ENCODE measurements at regions of chr20 and their contacts with region 1.

Region 1: GRCh38 chr20:48620519-48621254 is 207.1 kb downstream of the PREX1 start:
- DNase-seq: peak; percentile 60 to 67 (median 66)
- H3K4me3 ChIP-seq: no peak overlapping the region
- H3K4me3 Mint-ChIP-seq: peak overlapping the region in 7 of 8 donors; percentile 25 to 81 (median 73)
- H3K27ac ChIP-seq: no peak overlapping the region
- H3K27ac Mint-ChIP-seq: peak overlapping the region in 6 of 7 donors; percentile 27 to 89 (median 78)
- H3K4me1 ChIP-seq: peaks cover 13% of the 10 kb centered on the region
- H3K4me1 Mint-ChIP-seq: peaks cover 7 to 18% (median 12%) of the 10 kb centered on the region in 4 donors
- H3K27me3 ChIP-seq: no peaks in the 10 kb centered on the region
- H3K27me3 Mint-ChIP-seq: no peaks in the 10 kb centered on the region

Region 2: DNA sequence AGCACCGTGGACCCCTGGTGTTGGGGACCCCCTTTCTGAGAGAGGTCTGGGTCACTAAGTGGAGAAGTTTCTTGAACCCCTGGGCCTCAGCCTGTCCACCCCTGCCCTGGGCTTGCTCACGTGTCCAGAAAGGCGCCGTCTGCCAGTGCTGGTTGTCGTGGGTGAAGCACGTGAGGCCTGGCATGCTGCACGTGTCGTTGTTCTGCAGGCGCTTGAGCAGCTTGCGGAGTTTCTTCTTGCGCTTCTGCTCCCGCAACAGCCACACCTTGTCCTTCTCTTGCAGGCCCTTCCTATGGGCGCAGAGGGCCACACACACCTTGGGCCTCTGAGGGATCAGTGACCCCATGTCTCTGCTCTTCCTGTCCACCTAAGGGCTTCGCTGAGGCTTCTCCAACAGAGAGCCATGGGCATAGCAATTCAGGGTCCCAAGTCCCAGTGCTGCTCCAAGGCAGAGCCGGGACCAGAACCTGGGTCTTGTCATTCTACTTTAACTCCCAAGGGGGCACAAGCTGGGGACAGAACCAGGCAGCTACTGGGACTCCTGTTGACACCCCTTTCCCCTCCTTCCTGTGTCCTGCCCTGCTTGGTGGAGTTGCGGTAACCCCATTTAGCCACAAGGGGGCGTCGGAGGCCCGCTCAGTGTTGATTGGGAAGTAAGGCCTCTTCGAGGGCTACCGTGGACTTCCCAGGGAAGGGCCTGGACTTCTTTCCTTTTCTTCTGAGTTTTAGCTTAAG is 957.2 kb before region 1 on chr20:
- CTCF ChIA-PET with region 1: interaction called, 41 read pairs
- POLR2A ChIA-PET with region 1: no interaction called
- intact Hi-C with region 1: loop called (anchors 1 kb)
- DNase-seq: peak; percentile 62 to 74 (median 68)
- H3K4me3 ChIP-seq: no peak overlapping the region
- H3K4me3 Mint-ChIP-seq: peak overlapping the region in 1 of 8 donors; percentile 39
- H3K27ac ChIP-seq: no peak overlapping the region
- H3K27ac Mint-ChIP-seq: peak overlapping the region in 3 of 7 donors; percentile 26 to 70 (median 48)
- H3K4me1 ChIP-seq: peaks cover 4% of the 10 kb centered on the region
- H3K4me1 Mint-ChIP-seq: peaks cover 0 to 4% (median 2%) of the 10 kb centered on the region in 4 donors
- H3K27me3 ChIP-seq: no peaks in the 10 kb centered on the region
- H3K27me3 Mint-ChIP-seq: no peaks in the 10 kb centered on the region

Region 3: DNA sequence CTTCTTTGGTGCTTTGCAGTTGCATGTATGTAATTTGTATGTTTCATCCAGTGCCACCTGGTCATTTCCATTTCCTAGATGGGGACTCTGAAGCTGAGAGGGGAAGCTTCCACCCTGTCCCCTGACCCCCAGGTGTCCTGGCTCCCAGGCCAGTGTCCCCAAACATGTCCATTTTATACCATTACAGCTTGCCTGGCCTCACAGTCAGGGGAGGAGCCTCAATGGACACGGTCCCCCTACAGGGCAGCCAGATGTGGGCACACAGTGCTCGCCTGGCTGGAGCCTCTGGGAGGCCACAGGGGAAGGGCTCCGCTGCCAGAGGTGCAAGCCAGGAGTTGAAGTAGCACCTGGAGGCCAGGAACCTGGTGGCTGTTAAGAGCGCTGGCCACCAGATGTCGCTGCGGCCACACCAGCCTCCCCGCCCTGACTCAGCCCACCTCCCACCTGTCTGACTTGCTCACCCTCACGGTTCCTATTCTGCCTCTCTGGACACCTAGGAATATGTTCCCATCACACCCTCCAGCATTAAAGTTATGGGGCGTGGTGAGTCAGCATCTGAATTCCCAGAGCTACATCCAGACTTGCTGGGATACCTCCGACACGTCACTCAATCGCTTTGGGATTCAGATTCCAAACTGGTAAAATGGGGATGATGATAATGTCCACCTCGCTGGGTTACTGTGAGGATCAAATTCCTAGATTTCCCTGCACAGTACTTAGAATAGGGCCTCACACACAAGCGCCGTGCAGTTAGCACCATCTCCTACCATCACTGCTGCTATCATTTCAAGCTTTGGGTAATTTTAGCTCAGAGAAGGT is 942.8 kb before region 1 on chr20:
- CTCF ChIA-PET with region 1: interaction called, 78 read pairs
- POLR2A ChIA-PET with region 1: no interaction called
- intact Hi-C with region 1: loop called (anchors 1 kb)
- DNase-seq: peak; percentile 33 to 53 (median 47)
- H3K4me3 ChIP-seq: no peak overlapping the region
- H3K4me3 Mint-ChIP-seq: no peak overlapping the region
- H3K27ac ChIP-seq: no peak overlapping the region
- H3K27ac Mint-ChIP-seq: peak overlapping the region in 1 of 7 donors; percentile 53
- H3K4me1 ChIP-seq: no peaks in the 10 kb centered on the region
- H3K4me1 Mint-ChIP-seq: peaks cover 0 to 2% (median 0%) of the 10 kb centered on the region in 4 donors
- H3K27me3 ChIP-seq: no peaks in the 10 kb centered on the region
- H3K27me3 Mint-ChIP-seq: no peaks in the 10 kb centered on the region

Region 4: DNA sequence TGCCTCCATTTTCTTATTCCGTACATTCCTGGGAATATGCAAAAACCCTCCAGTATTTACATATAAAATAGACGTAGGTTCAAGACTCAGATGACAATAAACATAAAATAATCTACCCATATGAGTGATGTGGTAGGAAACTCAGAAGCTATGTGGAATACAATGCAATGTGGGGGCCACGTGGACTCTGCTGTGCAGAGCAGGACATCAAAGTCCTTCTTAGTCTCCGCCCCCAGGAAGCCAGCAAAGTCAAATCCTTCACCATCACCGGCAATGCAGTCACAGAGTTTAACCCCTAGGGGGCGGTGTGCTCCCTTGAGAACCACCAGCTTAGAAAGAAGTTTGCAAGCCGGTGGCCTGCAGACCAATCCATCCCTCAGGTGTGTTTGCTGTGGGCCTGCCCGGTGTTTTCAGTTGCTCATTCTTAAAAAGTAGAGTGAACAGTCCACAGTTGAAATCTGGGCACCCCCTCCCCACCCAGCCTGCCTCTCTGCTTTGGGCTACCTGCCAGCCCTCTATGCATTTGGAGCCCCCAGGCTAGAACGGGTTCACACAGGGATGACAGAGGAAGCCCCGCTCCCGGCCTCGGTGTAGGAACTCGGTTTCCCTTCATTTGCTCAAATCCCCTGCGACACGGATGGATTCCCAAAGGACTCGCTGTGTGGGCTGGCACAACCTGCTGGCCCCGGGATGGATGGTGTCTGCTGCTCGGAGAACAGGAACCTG is 895.3 kb before region 1 on chr20:
- CTCF ChIA-PET with region 1: interaction called, 44 read pairs
- POLR2A ChIA-PET with region 1: interaction called, 5 read pairs
- intact Hi-C with region 1: loop called (anchors 1 kb)
- DNase-seq: peak; percentile 83 to 89 (median 87)
- H3K4me3 ChIP-seq: no peak overlapping the region
- H3K4me3 Mint-ChIP-seq: no peak overlapping the region
- H3K27ac ChIP-seq: no peak overlapping the region
- H3K27ac Mint-ChIP-seq: peak overlapping the region; percentile 70 to 98 (median 88)
- H3K4me1 ChIP-seq: peaks cover 38% of the 10 kb centered on the region
- H3K4me1 Mint-ChIP-seq: peaks cover 29 to 49% (median 39%) of the 10 kb centered on the region in 4 donors
- H3K27me3 ChIP-seq: no peaks in the 10 kb centered on the region
- H3K27me3 Mint-ChIP-seq: no peaks in the 10 kb centered on the region

Region 5: DNA sequence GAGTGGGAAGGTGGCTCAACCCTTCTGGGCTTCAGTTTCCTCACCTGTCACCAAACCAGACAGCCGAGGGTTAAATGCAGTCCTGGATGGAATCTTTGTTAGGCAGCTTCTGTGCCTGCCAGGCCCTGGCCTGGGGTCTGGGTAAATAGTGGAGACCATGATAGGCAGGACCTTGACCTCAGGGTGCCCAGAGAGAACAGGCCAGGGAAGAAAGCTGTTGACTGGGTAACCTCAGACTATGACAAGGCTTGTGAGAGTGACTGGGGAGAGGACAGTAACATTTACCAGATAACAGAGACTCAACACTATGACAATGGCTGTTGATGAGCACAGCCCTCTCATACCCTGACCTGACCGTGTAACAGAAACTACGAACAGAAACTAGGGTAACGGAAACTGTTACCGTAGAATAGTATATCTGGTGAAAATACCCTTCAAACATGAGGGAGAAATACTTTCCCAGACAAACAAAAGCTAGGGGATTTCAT is 11.2 kb before region 1 on chr20:
- CTCF ChIA-PET with region 1: interaction called, 10 read pairs
- POLR2A ChIA-PET with region 1: no interaction called
- intact Hi-C with region 1: no loop called
- DNase-seq: no peak
- H3K4me3 ChIP-seq: no peak overlapping the region
- H3K4me3 Mint-ChIP-seq: peak overlapping the region in 1 of 8 donors; percentile 13
- H3K27ac ChIP-seq: no peak overlapping the region
- H3K27ac Mint-ChIP-seq: peak overlapping the region in 1 of 7 donors; percentile 23
- H3K4me1 ChIP-seq: no peaks in the 10 kb centered on the region
- H3K4me1 Mint-ChIP-seq: peaks cover 6% of the 10 kb centered on the region in 4 donors
- H3K27me3 ChIP-seq: no peaks in the 10 kb centered on the region
- H3K27me3 Mint-ChIP-seq: peaks cover 0 to 2% of the 10 kb centered on the region in 2 donors

Region 6: DNA sequence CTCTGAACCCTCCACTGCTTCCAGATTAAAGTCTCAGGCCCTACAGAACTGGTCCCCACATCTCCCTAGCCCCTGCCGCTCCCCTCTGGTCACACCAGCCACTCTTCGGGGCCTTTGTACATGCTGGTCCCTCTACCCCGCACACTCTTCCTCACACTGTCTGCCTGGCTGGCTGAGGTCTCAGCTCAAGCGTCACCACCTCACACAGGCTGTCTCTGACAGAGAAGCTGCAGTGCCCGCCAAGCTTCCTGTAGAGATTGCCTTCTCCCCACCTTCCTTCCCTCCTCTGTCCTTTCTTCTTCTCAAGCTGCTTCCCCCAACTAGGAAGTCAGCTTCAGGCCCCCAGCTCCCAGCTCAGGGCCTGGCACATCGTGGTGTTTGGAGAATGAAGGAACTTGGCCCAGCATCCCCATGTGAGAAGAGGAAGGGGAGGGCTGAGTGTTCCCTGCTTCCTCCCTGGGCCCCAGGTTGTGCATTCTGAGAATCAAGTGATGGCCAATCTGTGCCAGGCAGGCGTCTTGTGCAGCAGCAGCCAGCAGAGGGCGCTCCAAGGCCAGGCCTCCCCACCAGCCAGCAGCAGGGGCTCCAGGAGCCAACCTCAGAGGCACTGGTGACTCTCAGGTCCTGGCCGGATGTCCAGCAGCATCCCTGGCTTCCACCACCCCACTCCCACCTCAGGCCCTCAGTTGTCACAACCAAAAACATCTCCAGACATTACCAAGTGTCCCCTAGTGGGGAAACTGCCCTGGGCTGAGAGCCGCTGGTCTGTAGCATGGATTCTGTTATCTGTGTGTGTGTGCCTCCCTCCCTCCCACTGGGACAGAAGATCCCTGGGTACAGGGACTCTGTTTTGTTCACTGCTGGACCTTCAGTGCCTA is 15.0 kb after region 1 on chr20:
- CTCF ChIA-PET with region 1: interaction called, 16 read pairs
- POLR2A ChIA-PET with region 1: no interaction called
- intact Hi-C with region 1: no loop called
- DNase-seq: peak in 4 of 5 donors; percentile 58 to 66 (median 60)
- H3K4me3 ChIP-seq: no peak overlapping the region
- H3K4me3 Mint-ChIP-seq: peak overlapping the region in 1 of 8 donors; percentile 57
- H3K27ac ChIP-seq: no peak overlapping the region
- H3K27ac Mint-ChIP-seq: peak overlapping the region; percentile 52 to 89 (median 68)
- H3K4me1 ChIP-seq: no peaks in the 10 kb centered on the region
- H3K4me1 Mint-ChIP-seq: peaks cover 0 to 9% (median 3%) of the 10 kb centered on the region in 4 donors
- H3K27me3 ChIP-seq: no peaks in the 10 kb centered on the region
- H3K27me3 Mint-ChIP-seq: no peaks in the 10 kb centered on the region

Measured in CD4-positive, alpha-beta memory T cell (primary cell).